Upper lobe of right lung (tissue), 1 donor: ENCODE measurements at regions of chr20 and their contacts with region 1.

Region 1: GRCh38 chr20:9407805-9408421 is 106.5 kb upstream of the LAMP5 start:
- DNase-seq: no peak
- ATAC-seq: peak; percentile 93
- H3K4me3 ChIP-seq: no peak overlapping the region
- H3K27ac ChIP-seq: no peak overlapping the region
- H3K4me1 ChIP-seq: peaks cover 4% of the 10 kb centered on the region
- H3K27me3 ChIP-seq: no peaks in the 10 kb centered on the region
- CTCF ChIP-seq: peak; percentile 88

Region 2: DNA sequence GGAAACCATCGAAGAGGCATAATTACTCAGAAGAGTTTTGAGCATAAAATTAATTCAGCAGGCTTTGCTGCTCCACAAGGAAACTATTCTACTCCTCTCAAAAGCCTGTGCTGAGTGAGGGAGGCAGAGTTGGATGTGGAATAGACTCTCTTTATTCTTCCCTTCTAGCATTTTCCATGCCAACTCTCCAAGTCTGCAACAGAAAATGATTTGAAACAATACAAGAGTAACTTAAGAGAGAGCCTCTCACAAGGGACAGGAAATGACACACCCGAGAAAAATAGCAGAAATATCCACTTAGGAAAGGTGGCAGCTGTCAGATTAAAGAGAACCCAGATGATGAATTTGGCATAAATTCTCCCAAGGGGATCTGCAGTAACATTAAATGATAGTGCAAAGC is 80.2 kb after region 1 on chr20:
- intact Hi-C with region 1: no loop called
- DNase-seq: no peak
- ATAC-seq: no peak
- H3K4me3 ChIP-seq: no peak overlapping the region
- H3K27ac ChIP-seq: no peak overlapping the region
- H3K4me1 ChIP-seq: no peaks in the 10 kb centered on the region
- H3K27me3 ChIP-seq: no peaks in the 10 kb centered on the region
- CTCF ChIP-seq: no peak

Region 3: DNA sequence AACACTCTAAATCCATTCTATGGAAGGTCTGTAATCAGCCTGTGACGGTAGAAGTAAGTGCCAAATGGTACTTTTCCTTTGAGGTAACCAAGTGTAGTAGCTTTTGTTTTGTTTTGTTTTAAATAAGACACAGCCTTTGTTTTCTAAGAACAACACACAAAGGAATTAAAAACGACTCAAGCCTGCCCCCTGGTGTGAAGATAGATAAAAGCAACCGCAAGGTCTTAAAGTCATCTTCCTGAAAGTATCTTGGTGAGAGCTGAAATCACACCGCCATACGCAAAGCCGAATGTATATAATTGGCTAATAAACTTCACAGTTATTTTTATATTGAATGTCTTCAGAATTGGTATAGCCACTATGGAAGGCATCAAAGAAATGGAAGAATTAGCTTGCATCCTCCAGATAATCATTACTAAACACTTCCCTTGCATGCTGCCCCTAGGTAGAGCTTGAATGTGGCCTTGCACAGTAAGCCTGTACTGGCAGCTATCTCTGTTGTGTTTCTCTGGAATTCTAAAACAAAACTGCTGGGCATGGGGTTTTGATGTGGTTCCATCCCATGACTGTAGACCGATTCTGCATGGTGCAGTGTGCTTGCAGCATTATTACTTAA is 202.1 kb after region 1 on chr20:
- intact Hi-C with region 1: loop called (anchors 5 kb)
- DNase-seq: no peak
- ATAC-seq: peak; percentile 71
- H3K4me3 ChIP-seq: no peak overlapping the region
- H3K27ac ChIP-seq: no peak overlapping the region
- H3K4me1 ChIP-seq: no peaks in the 10 kb centered on the region
- H3K27me3 ChIP-seq: no peaks in the 10 kb centered on the region
- CTCF ChIP-seq: peak; percentile 73